B cell (primary cell): ENCODE measurements at regions of chr2 and their contacts with region 1.

Region 1: DNA sequence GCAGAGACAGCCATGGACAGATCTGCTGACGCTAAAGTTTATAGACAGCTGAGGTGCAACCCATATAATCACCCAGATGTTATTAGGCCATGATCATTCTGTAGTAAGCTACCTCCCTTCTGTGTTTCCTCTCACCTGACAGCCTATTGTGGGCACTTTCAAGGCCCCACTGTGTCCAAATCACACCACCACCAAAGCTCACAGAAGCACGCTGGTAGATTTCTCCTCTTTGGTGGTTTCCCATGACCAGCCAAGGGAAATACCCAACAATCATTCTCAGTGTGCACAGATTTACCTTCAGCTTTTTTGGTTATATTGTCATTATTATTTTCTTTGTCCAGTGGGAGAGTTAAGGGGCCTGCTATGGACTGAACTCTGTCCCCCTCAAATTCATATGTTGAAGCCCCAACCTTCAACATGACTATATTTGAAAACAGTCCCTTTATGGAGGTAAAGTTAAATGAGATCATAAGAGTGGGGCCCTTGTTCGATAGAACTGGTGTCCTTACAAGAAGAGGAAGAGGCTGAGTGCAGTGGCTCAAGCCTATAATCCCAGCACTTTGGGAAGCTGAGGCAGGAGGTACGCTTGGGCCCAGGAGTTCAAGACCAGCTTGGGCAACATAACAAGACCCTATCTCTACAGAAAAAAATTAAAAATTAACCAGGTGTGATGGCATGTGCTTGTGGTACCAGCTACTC is 74.0 kb upstream of the MSH6 start:
- DNase-seq: peak; percentile 71
- ATAC-seq: peak; percentile 88
- H3K4me3 ChIP-seq: no peak overlapping the region
- H3K4me3 Mint-ChIP-seq: peak overlapping the region; percentile 43
- H3K27ac ChIP-seq: peak overlapping the region; percentile 11 to 74
- H3K27ac Mint-ChIP-seq: peak overlapping the region; percentile 79
- H3K4me1 ChIP-seq: peaks cover 21 to 30% of the 10 kb centered on the region in 2 donors
- H3K4me1 Mint-ChIP-seq: peaks cover 22% of the 10 kb centered on the region
- H3K27me3 ChIP-seq: no peaks in the 10 kb centered on the region
- H3K27me3 Mint-ChIP-seq: no peaks in the 10 kb centered on the region
- CTCF ChIP-seq: no peak

Region 2: GRCh38 chr2:47719099-47719498 is 10.1 kb after region 1 on chr2:
- CTCF ChIA-PET with region 1: interaction called, 5 read pairs
- POLR2A ChIA-PET with region 1: interaction called, 10 read pairs
- intact Hi-C with region 1: no loop called
- DNase-seq: peak; percentile 34
- ATAC-seq: peak; percentile 29
- H3K4me3 ChIP-seq: no peak overlapping the region
- H3K4me3 Mint-ChIP-seq: peak overlapping the region; percentile 48
- H3K27ac ChIP-seq: no peak overlapping the region
- H3K27ac Mint-ChIP-seq: peak overlapping the region; percentile 75
- H3K4me1 ChIP-seq: peaks cover 48 to 74% of the 10 kb centered on the region in 2 donors
- H3K4me1 Mint-ChIP-seq: peaks cover 44% of the 10 kb centered on the region
- H3K27me3 ChIP-seq: peaks cover 0 to 2% (median 0%) of the 10 kb centered on the region in 4 experiments
- H3K27me3 Mint-ChIP-seq: no peaks in the 10 kb centered on the region
- CTCF ChIP-seq: no peak